AG04450 (cell line): ENCODE measurements at regions of chr5 and their contacts with region 1.

Region 1: GRCh38 chr5:176400382-176401156 is 12.0 kb downstream of the HIGD2A start:
- DNase-seq: no peak
- H3K4me3 ChIP-seq: no peak overlapping the region
- H3K27ac ChIP-seq: no peak overlapping the region
- H3K27me3 ChIP-seq: no peaks in the 10 kb centered on the region
- CTCF ChIP-seq: no peak

Region 2: DNA sequence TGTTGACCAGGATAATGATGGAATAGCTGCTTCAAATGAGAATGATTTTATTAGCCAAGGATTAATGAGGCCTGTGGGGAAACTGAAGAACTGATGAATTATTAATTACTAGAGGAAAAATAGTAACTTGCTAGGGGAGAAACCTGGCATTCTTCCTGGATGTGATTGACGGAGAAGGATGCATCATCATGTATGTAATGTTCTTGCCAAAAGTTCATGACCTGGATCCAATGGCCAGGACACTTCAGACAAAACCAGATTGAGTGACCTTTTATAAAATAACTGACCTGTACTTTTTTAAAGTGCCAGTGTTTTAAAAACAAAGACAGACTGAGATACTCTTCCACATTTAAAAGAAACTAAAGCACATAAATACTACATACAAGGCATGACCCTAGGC is 62.7 kb before region 1 on chr5:
- CTCF ChIA-PET with region 1: interaction called, 11 read pairs
- POLR2A ChIA-PET with region 1: no interaction called
- DNase-seq: no peak
- H3K4me3 ChIP-seq: no peak overlapping the region
- H3K27ac ChIP-seq: no peak overlapping the region
- H3K27me3 ChIP-seq: no peaks in the 10 kb centered on the region
- CTCF ChIP-seq: no peak

Region 3: DNA sequence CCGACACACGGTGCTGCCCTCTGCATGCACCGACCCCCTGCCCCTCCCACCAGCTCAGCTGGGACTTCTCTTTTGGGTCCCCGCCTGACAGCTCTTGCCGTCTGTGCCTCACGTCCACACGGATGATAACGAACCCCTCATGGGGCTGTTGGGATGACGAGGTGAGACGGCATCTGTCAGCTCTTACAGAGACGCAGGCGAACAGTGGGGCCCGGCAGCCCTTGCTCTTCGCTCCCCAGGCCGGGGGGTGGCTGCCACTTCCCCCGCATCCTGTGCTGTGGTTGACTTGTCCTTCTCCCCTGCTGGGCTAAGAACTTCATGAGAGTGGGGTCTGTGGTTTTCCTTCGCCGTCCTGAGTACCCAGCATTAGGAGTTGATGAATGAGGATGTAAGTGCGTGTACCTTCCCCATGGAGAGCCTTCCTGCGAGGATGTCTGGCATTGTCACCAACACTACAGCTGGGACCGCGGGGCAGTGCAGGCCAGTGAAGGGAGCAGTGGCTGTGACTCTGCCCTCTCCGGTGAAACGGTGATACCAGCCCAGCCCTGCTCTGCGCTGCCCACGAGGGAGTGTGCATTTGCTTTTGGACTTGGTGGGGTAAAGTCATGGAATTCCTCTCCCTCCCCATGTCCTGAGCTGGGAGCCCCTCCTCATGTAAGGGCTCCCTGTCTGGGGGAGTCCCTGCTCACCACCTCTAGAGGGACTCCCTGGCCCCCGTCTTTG is 475.4 kb after region 1 on chr5:
- CTCF ChIA-PET with region 1: no interaction called
- POLR2A ChIA-PET with region 1: no interaction called
- DNase-seq: no peak
- H3K4me3 ChIP-seq: no peak overlapping the region
- H3K27ac ChIP-seq: no peak overlapping the region
- H3K27me3 ChIP-seq: peaks cover 58% of the 10 kb centered on the region
- CTCF ChIP-seq: no peak